Psoas muscle (tissue), 8 donors: ENCODE measurements at regions of chr3 and their contacts with region 1.

Region 1: GRCh38 chr3:128133273-128134084 is 9.9 kb upstream of the RUVBL1 start:
- DNase-seq: no peak
- ATAC-seq: peak in 3 of 4 donors; percentile 55 to 75 (median 57)
- H3K4me3 ChIP-seq: no peak overlapping the region
- H3K27ac ChIP-seq: no peak overlapping the region
- H3K4me1 ChIP-seq: no peaks in the 10 kb centered on the region
- H3K27me3 ChIP-seq: peaks cover 2 to 13% (median 4%) of the 10 kb centered on the region in 3 donors
- CTCF ChIP-seq: peak; percentile 52

Region 2: DNA sequence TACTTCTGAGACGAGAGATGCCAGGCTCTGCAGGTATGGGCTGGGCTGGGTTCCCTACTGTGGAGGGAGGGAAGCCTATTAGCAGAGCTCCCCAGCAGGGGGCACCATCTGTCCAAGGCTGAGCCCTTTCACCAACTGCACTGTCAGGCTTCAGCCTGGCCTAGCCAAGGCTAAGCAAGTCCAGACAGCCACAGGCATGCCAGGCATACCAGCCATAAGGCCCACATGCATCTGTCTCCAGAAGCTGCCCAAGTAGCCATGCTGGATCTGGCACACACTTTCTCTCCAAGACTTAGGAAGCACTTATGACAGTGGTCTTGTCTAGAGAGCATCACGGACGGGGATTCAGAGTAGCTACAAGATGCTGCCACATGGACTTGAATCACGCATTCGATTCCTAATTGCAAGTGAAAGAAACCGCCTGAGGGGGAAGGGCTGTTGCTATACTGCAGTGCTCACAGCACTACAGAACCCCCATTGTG is 38.2 kb before region 1 on chr3:
- intact Hi-C with region 1: loop called in 1 of 2 experiments (anchors 5 kb)
- DNase-seq: peak; percentile 76 to 88
- ATAC-seq: peak; percentile 96 to 100 (median 98)
- H3K4me3 ChIP-seq: no peak overlapping the region
- H3K27ac ChIP-seq: peak overlapping the region; percentile 30
- H3K4me1 ChIP-seq: peaks cover 4% of the 10 kb centered on the region
- H3K27me3 ChIP-seq: no peaks in the 10 kb centered on the region
- CTCF ChIP-seq: peak; percentile 88